ENCODE measurements at regions of chr12 and their contacts with region 1.

Region 1: DNA sequence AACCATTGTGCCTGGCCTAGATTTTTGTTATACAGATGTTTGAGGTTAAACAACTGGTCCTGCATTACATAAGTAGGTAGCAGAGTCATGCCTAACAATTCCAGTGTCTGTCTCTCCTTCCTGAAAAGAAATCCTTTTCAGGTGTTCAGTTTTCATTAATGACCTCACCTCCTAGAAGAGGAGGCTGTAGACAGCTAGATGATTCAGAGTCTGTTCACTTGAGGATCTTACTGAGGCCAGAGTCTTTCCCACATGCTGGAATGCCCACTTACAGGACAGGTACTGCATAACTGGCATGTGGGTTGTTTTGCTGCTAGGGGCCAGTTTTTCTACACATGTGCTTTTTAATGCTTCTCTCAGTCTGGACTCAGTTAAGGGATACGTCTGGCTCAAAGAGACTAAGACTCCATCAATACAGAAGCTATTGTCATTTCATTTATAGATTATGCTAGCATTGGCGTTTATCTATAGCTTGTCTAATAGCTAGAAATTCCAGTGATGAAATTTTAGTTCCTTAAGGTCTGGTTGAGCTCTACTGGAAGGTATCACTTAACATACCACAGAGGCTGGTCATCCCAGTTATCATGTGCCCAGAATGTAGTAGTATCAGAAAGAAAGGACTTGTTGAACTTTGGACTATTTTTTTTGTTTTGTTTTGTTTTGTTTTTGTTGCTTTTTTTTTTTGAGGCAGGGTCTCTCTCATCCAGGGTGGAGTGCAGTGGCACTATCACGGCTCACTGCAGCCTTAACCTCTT is 206.4 kb downstream of the ERC1 start:
- DNase-seq: no peak
- ATAC-seq: no peak
- H3K4me3 ChIP-seq: no peak overlapping the region
- H3K4me3 Mint-ChIP-seq: no peak overlapping the region
- H3K27ac ChIP-seq: no peak overlapping the region
- H3K27ac Mint-ChIP-seq: no peak overlapping the region
- H3K4me1 ChIP-seq: peaks cover 4% of the 10 kb centered on the region
- H3K4me1 Mint-ChIP-seq: peaks cover 5% of the 10 kb centered on the region
- H3K27me3 ChIP-seq: no peaks in the 10 kb centered on the region
- H3K27me3 Mint-ChIP-seq: no peaks in the 10 kb centered on the region
- CTCF ChIP-seq: no peak

Region 2: DNA sequence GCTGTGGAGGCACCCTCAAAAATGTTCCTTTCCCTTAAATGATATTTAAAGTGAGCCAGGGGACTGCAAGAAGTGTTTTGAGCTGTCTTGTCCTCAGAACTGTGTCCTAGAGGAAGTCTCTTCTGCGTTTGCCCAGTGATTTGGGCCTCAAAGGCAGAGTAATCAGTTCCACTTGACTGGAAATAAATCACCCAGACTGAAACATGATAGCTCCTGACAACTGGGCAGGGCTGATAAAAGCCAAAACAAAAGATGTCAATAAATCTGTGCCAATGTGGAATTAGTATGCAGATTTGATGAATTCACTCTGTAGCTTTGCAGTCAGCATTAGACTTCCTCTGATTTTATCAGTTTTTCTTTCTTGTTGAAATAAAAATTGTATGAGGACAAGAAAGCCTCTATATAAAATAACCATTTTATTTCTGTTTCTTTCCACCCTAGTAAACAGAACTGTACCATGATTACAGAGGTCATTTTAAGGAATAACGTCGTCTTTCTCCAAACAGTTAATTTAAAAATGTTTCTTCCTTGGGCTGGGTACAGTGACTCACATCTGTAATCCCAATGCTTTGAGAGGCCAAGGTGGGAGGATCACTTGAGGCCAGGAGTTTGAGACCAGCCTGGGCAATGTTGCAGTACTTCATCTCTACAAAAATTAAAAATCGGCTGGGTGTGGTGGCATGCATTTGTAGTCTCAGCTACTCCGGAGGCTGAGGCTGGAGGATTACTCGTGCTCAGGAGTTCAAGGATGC is 25.6 kb before region 1 on chr12:
- CTCF ChIA-PET with region 1: no interaction called
- POLR2A ChIA-PET with region 1: no interaction called
- intact Hi-C with region 1: no loop called
- DNase-seq: no peak
- ATAC-seq: no peak
- H3K4me3 ChIP-seq: no peak overlapping the region
- H3K4me3 Mint-ChIP-seq: no peak overlapping the region
- H3K27ac ChIP-seq: no peak overlapping the region
- H3K27ac Mint-ChIP-seq: no peak overlapping the region
- H3K4me1 ChIP-seq: no peaks in the 10 kb centered on the region
- H3K4me1 Mint-ChIP-seq: no peaks in the 10 kb centered on the region
- H3K27me3 ChIP-seq: no peaks in the 10 kb centered on the region
- H3K27me3 Mint-ChIP-seq: no peaks in the 10 kb centered on the region
- CTCF ChIP-seq: no peak

Region 3: GRCh38 chr12:1212526-1212925 is 15.1 kb after region 1 on chr12:
- CTCF ChIA-PET with region 1: interaction called, 3 read pairs
- POLR2A ChIA-PET with region 1: no interaction called
- intact Hi-C with region 1: loop called in 1 of 2 experiments (anchors 1 kb)
- DNase-seq: no peak
- ATAC-seq: no peak
- H3K4me3 ChIP-seq: no peak overlapping the region
- H3K4me3 Mint-ChIP-seq: no peak overlapping the region
- H3K27ac ChIP-seq: no peak overlapping the region
- H3K27ac Mint-ChIP-seq: no peak overlapping the region
- H3K4me1 ChIP-seq: no peaks in the 10 kb centered on the region
- H3K4me1 Mint-ChIP-seq: no peaks in the 10 kb centered on the region
- H3K27me3 ChIP-seq: no peaks in the 10 kb centered on the region
- H3K27me3 Mint-ChIP-seq: no peaks in the 10 kb centered on the region
- CTCF ChIP-seq: no peak

Measured in CD8-positive, alpha-beta T cell (primary cell).